ENCODE measurements at regions of chr1 and their contacts with region 1.

Region 1: GRCh38 chr1:158998781-158999161 is 10.9 kb upstream of the IFI16 start:
- DNase-seq: peak; percentile 60 to 72
- ATAC-seq: peak; percentile 53 to 77 (median 61)
- H3K4me3 ChIP-seq: peak overlapping the region; percentile 61
- H3K27ac ChIP-seq: peak overlapping the region; percentile 81
- H3K4me1 ChIP-seq: peaks cover 4% of the 10 kb centered on the region
- H3K27me3 ChIP-seq: no peaks in the 10 kb centered on the region
- CTCF ChIP-seq: peak; percentile 89

Region 2: GRCh38 chr1:158203693-158204457 is 794.9 kb before region 1 on chr1:
- intact Hi-C with region 1: loop called (anchors 2 to 5 kb)
- DNase-seq: no peak
- ATAC-seq: peak in 2 of 4 donors; percentile 54 to 61
- H3K4me3 ChIP-seq: no peak overlapping the region
- H3K27ac ChIP-seq: no peak overlapping the region
- H3K4me1 ChIP-seq: no peaks in the 10 kb centered on the region
- H3K27me3 ChIP-seq: no peaks in the 10 kb centered on the region
- CTCF ChIP-seq: peak; percentile 79

Region 3: DNA sequence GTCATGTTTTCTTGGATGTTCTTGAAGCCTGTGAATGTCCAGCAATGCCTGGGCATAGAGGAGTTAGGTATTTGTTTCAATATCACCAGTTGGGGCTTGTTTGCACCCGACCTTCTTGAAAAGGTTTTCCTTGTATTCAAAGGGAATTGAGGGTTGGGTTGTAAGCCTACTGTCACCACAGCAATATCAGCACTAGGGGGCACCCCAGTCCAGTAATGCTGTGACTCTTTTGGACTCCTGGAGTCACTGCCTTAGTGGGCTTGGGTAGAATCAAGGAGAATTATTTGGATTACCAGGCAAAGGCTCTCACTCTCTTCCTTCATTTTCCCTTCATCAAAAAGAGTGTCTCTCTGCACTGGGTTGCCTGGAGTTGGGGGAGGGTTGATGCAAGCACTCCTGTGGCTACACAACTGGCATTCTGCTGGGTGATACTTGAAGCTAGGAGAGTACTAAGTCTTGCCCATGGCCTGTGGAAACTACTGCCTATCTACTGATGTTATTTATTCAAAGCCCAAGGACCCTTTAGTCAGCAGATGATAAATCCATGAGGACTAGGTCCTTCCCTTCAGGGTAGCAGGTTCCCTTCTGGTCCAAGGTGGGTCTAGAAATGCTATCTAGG is 492.3 kb before region 1 on chr1:
- intact Hi-C with region 1: loop called in 1 of 2 experiments (anchors 5 kb)
- DNase-seq: no peak
- ATAC-seq: no peak
- H3K4me3 ChIP-seq: no peak overlapping the region
- H3K27ac ChIP-seq: no peak overlapping the region
- H3K4me1 ChIP-seq: no peaks in the 10 kb centered on the region
- H3K27me3 ChIP-seq: no peaks in the 10 kb centered on the region
- CTCF ChIP-seq: no peak